Ascending aorta (tissue), 2 donors: ENCODE measurements at regions of chr13 and their contacts with region 1.

Region 1: GRCh38 chr13:39273953-39274738 is 235.9 kb downstream of the NHLRC3 start:
- DNase-seq: no peak
- H3K4me3 ChIP-seq: no peak overlapping the region
- H3K27ac ChIP-seq: no peak overlapping the region
- H3K4me1 ChIP-seq: no peaks in the 10 kb centered on the region
- H3K27me3 ChIP-seq: no peaks in the 10 kb centered on the region
- CTCF ChIP-seq: peak in 1 of 3 experiments; percentile 30

Region 2: GRCh38 chr13:39016087-39016486 is 258.1 kb before region 1 on chr13:
- intact Hi-C with region 1: no loop called
- DNase-seq: no peak
- H3K4me3 ChIP-seq: no peak overlapping the region
- H3K27ac ChIP-seq: no peak overlapping the region
- H3K4me1 ChIP-seq: no peaks in the 10 kb centered on the region
- H3K27me3 ChIP-seq: no peaks in the 10 kb centered on the region
- CTCF ChIP-seq: no peak

Region 3: GRCh38 chr13:39232401-39232980 is 41.7 kb before region 1 on chr13:
- intact Hi-C with region 1: no loop called
- DNase-seq: no peak
- H3K4me3 ChIP-seq: no peak overlapping the region
- H3K27ac ChIP-seq: no peak overlapping the region
- H3K4me1 ChIP-seq: no peaks in the 10 kb centered on the region
- H3K27me3 ChIP-seq: no peaks in the 10 kb centered on the region
- CTCF ChIP-seq: no peak

Region 4: DNA sequence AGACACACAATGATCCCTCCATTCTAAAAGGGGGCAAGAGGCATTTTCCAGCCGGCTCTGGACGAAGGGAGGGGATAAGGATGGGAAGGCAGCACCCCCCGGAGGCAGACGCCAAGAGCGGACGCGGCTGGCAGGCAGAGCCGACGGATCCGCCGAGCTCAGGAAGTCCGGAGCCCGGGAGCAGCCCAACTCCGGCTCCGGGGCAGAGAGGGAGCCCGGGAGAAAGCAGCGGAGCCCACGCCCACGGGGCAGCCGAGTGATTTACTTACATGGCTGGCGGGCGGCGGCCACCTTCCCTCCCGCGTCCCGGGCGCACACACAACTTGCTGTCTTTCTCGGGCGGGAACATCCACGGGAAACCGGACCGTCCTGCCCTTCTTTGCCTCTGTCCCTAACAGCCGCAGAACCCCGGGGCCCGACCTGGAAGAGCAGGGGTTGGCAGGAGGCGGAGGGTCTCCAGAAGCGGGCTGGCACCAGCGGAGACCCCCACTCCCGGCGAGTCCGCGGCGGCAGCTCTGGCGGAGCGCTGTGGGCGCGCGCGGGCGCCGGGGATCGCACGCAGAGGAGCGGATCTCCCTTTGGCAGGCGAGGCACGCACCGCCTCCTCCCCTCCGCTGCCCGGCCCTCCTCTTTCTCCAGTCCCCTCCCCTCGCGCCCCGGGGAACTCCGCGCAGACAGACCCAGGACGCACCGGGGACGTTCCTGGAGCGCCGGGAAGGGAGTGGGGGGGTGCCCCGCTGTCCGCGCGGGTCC is 328.6 kb after region 1 on chr13 and contains the start of gene LHFPL6:
- intact Hi-C with region 1: loop called (anchors 5 kb)
- DNase-seq: peak; percentile 35 to 90
- H3K4me3 ChIP-seq: peak within 1 kb of the TSS; percentile 82 to 92
- H3K27ac ChIP-seq: peak within 1 kb of the TSS; percentile 83 to 85
- H3K4me1 ChIP-seq: peaks cover 3 to 9% of the 10 kb centered on the region in 2 donors
- H3K27me3 ChIP-seq: no peaks in the 10 kb centered on the region
- CTCF ChIP-seq: peak in 2 of 3 experiments; percentile 25 to 29
- total RNA-seq, gene LHFPL6: 69.4 TPM